K562 (cell line): ENCODE measurements at regions of chr1 and their contacts with region 1.

Region 1: DNA sequence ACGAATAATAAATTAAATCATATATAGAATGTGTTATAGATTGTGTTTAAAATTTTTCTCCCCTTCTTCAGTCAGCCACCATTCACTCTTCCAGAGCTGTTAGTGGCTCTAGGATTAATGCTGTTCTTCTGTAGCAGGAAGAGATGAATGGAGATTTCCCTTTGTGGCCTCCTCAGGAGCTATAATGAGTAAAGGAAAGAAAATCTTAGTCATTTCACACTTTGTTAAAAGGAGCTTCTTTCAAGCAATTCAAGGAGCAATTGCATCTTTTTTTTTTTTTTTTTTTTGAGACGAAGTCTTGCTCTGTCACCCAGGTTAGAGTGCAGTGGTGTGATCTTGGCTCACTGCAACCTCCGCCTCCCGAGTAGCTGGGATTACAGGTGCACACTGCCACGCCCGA is 23.7 kb upstream of the TMCO2 start:
- DNase-seq: no peak
- ATAC-seq: no peak
- H3K4me3 ChIP-seq: no peak overlapping the region
- H3K27ac ChIP-seq: no peak overlapping the region
- H3K4me1 ChIP-seq: peaks cover 12 to 20% of the 10 kb centered on the region in 2 experiments; a peak in 4 of 5 replicates
- H3K27me3 ChIP-seq: no peaks in the 10 kb centered on the region
- CTCF ChIP-seq: no peak
- EP300 ChIP-seq: no peak
- POLR2A ChIP-seq: no peak
- RAD21 ChIP-seq: no peak

Region 2: DNA sequence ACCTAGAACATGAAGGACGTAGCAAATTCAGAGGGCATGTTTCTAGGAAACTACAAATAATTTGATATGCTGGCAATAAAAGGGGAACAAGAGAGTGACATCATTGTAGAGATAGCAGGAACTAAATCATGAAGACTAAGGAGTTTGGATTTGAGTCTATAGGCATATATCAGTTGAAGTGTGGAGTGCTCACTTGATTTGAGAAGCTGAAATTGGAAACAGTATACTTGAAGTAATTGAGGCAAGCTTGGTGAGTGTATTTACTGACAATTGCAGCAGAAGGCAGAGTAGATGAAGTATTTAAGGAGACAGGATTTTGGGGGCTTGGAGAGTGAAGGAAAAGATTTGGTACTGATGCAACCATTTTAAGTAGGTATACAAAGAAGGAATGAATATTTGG is 17.3 kb after region 1 on chr1:
- CTCF ChIA-PET with region 1: no interaction called
- POLR2A ChIA-PET with region 1: interaction called, 25 read pairs
- in situ Hi-C with region 1: no loop called
- intact Hi-C with region 1: no loop called
- DNase-seq: no peak
- ATAC-seq: no peak
- H3K4me3 ChIP-seq: no peak overlapping the region
- H3K27ac ChIP-seq: no peak overlapping the region
- H3K4me1 ChIP-seq: 0 out of 5 replicates have a peak, but pooled peaks cover 0 to 3% of the 10 kb centered on the region in 2 experiments
- H3K27me3 ChIP-seq: no peaks in the 10 kb centered on the region
- CTCF ChIP-seq: no peak
- EP300 ChIP-seq: no peak
- POLR2A ChIP-seq: peak; percentile 70
- RAD21 ChIP-seq: no peak

Region 3: DNA sequence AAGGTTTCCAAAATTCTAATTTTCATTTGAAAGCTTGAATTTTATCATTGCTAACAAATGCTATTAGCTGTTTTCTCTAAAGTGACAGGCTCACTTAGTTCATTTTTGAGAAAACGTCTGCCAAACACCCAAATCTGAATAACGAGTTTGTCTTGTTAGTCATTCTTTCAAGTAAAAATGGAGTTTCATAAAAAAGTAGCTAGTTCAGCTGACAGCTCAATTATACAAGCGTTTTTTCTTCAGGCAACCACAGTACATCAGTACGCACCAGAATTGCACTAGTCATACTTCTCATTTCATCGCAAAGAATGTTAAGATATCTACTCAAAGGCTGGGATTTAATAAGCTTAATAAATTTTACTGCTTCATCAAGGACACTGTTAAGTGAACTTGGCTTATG is 869.8 kb after region 1 on chr1:
- CTCF ChIA-PET with region 1: no interaction called
- POLR2A ChIA-PET with region 1: no interaction called
- in situ Hi-C with region 1: no loop called
- intact Hi-C with region 1: no loop called
- DNase-seq: no peak
- ATAC-seq: no peak
- H3K4me3 ChIP-seq: no peak overlapping the region
- H3K27ac ChIP-seq: no peak overlapping the region
- H3K4me1 ChIP-seq: no peaks in the 10 kb centered on the region
- H3K27me3 ChIP-seq: no peaks in the 10 kb centered on the region
- CTCF ChIP-seq: no peak
- EP300 ChIP-seq: no peak
- POLR2A ChIP-seq: no peak
- RAD21 ChIP-seq: no peak